Activated T-helper 1 cell treated with anti-CD3 and anti-CD28 coated beads, Interleukin-12 subunit alpha, Interleukin-12 subunit beta, Interleukin-2, Interleukin-4 antibody, amounts not matched to agents 30 ng/mL and 10 ng/mL and 1 ng/mL, durations not matched to agents 14 hours and 24 hours and 36 hours (primary cell): ENCODE measurements at regions of chr5 and their contacts with region 1.

Region 1: GRCh38 chr5:14914603-14915277 is 43.2 kb upstream of the ANKH start:
- DNase-seq: no peak
- H3K4me3 Mint-ChIP-seq: no peak overlapping the region
- H3K27ac Mint-ChIP-seq: peak overlapping the region; percentile 40
- H3K4me1 Mint-ChIP-seq: peaks cover 7% of the 10 kb centered on the region
- H3K27me3 Mint-ChIP-seq: peaks cover 7% of the 10 kb centered on the region

Region 2: DNA sequence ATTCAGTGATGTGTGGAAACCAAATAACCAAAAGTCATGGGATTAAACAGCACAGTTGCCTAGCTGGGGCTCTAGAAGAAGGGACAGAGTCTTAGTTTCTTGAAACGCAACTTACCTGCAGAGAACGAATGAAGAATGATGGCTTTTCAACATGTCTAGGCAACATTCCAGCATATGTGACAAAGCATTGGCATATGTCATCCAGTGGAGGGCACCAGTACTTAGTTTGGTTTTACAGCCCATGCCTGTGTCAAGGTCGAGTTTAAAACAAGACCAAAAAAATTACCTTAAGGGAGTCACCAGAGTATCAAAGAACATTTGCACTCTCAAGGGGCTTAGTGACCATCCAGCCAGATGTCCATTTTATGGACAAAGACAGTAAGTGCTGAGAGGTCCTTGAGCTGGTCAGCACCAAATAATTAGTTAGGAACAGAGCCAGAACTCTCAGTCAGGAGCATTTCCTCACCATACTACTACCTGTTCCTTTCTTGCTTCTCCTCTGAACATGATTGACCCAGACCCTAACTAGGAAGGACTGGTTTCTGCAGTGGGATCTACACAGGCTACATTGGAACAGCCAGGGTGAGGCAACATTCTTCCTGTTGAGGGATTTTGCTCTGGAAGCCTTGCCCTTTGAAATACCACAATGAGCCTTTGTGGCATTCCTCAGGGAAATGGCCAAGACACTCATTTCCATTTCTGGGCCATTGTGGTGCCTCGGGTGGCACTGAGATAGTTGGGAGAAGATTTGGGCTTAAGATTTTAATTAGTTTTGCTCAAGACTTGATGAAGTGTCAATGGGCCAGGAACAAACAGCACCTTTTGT is 32.3 kb after region 1 on chr5:
- intact Hi-C with region 1: loop called (anchors 2 kb)
- DNase-seq: peak; percentile 10
- H3K4me3 Mint-ChIP-seq: no peak overlapping the region
- H3K27ac Mint-ChIP-seq: no peak overlapping the region
- H3K4me1 Mint-ChIP-seq: no peaks in the 10 kb centered on the region
- H3K27me3 Mint-ChIP-seq: no peaks in the 10 kb centered on the region